A549 (cell line): ENCODE measurements at regions of chr9 and their contacts with region 1.

Region 1: GRCh38 chr9:128863647-128864046 is 18.1 kb downstream of the KYAT1 start:
- DNase-seq: peak; percentile 78 to 82
- ATAC-seq: peak; percentile 96 to 99
- H3K4me3 ChIP-seq: no peak overlapping the region
- H3K27ac ChIP-seq: peak overlapping the region; percentile 62 to 79; a peak in 4 of 6 replicates
- H3K4me1 ChIP-seq: peaks cover 16% of the 10 kb centered on the region; the same call in 2 of the 3 replicates
- CTCF ChIP-seq: peak; percentile 87
- EP300 ChIP-seq: no peak
- POLR2A ChIP-seq: no peak
- RAD21 ChIP-seq: peak; percentile 86 to 88

Region 2: DNA sequence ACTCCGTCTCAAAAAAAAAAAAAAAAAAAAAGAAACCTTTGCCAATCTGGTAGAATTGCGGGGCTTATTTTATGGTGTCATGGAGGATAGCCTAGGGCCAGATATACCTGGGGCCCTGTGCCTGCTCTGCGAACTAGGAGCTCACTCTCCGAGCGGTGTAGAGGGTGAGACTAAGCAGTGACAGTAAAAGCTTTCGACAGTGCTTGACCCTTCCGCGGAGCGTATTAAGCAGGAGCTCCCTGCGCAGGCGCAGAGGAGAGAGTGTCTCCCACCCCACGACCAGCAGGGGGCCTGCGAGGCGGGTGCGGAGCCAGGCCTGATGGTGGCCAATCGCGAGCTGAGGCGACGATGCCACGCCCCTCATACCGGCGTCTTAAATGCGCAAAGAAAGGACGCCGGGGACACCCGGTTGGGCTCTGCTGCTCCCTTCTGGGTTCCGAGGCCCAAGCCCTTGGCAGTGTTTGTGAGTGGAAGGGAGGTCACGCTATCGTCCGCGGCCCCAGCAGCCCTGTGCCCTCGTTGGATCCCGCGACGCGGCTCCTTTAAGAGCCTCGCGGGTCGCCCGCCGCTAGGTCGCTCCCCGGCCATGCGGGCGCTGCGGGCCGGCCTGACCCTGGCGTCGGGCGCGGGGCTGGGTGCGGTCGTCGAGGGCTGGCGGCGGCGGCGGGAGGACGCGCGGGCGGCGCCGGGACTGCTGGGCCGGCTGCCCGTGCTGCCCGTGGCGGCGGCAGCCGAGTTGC is 45.4 kb before region 1 on chr9 and contains the start of gene ENDOG:
- CTCF ChIA-PET with region 1: interaction called, 11 read pairs
- POLR2A ChIA-PET with region 1: no interaction called
- DNase-seq: peak; percentile 97 to 98
- ATAC-seq: peak; percentile 86 to 92
- H3K4me3 ChIP-seq: peak within 1 kb of the TSS; percentile 76
- H3K27ac ChIP-seq: peak within 1 kb of the TSS; percentile 90 to 93
- H3K4me1 ChIP-seq: peaks cover 11% of the 10 kb centered on the region
- CTCF ChIP-seq: peak; percentile 72
- EP300 ChIP-seq: no peak
- POLR2A ChIP-seq: peak; percentile 96
- RAD21 ChIP-seq: peak; percentile 22 to 31; a peak in 1 of 5 replicates
- polyA plus RNA-seq, gene ENDOG: 12.6 and 12.8 TPM in 2 replicates

Region 3: DNA sequence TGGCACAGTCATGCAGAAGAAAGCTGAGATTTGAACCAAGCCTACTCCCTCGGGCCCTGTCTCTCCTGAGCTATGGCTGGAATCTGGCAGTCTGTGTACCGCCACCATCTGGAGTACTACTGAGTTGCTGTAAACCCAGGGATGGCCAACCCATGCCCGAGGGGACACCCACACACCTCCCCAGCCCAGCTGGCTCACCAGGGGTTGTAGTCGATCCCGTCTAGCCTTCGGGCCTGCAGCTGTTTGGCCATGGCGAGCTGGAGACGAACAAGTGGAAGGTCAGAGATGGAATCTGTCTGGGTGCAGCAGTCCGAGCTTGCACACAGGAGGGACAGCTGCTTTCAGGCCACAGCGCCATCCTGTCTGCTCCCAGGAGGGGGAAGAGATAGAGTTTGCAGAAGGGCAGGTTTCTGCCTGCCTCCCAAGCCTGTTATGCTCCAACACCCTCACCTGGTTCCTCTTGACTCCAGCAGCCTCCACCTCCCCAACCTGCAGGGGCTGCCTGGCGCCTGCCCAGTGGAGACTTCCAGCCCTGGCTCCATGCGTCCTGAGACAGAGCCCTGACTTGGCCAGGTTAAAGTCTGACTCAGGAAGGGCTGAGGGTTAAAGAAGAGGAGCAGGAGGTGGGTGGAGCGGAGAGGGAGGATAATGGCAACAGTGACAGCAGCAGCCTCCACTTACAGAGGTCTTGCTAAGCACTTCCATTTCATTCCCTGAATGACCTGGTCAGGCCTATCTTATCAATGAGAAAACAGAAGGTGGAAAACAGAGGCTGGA is 18.3 kb before region 1 on chr9:
- CTCF ChIA-PET with region 1: interaction called, 18 read pairs
- POLR2A ChIA-PET with region 1: no interaction called
- DNase-seq: no peak
- ATAC-seq: peak; percentile 78 to 86
- H3K4me3 ChIP-seq: no peak overlapping the region
- H3K27ac ChIP-seq: no peak overlapping the region
- H3K4me1 ChIP-seq: no peaks in the 10 kb centered on the region
- CTCF ChIP-seq: no peak
- EP300 ChIP-seq: no peak
- POLR2A ChIP-seq: no peak
- RAD21 ChIP-seq: no peak

Region 4: DNA sequence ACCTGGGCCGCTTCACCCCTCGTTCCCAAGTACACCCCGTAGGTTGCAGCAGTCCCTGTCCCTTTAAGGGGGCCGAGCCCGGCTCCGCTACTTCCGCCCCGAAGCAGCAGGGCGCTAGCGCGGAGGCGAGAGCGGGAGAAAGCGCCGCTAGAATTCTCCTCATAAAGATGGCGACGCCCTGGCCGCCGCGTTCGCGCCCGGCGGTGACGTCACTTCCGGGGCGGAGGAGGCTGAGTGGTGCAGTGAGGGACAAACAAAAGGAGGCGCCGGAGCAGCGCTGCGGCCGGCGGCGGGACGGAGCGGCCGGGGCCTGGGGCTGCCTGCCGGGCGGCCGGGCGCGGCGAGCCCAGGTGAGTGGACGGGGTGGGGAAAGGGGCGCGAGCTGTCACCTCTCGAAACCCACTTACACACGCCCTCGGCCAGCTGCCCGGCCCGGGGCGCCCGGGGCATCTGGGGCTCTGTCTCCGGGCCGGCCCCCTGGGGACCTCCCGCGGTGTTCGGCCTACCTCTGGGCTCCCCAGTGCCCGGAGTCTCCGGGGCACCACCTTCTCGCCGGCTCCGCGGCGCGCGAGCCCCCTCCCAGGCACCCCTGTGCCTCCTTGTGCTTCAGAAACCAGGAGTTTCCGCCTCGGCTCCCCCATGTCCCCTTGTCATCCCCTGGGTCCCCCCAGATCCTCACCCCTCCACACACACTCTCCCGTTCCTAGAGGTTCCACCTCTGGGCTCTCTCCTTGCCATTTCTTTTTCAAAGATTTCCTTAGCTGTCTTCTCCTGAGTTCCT is 18.4 kb after region 1 on chr9 and contains the starts of genes KYAT1 and LRRC8A:
- CTCF ChIA-PET with region 1: interaction called, 127 read pairs
- POLR2A ChIA-PET with region 1: interaction called, 3 read pairs
- DNase-seq: peak; percentile 95 to 96
- ATAC-seq: peak; percentile 92 to 94
- H3K4me3 ChIP-seq: peak within 1 kb of the TSS; percentile 93
- H3K27ac ChIP-seq: peak within 1 kb of the TSS; percentile 96 to 98
- H3K4me1 ChIP-seq: peaks cover 45% of the 10 kb centered on the region
- CTCF ChIP-seq: peak; percentile 13; the same call in 1 of the 3 replicates
- EP300 ChIP-seq: no peak
- POLR2A ChIP-seq: peak; percentile 84
- RAD21 ChIP-seq: 0 out of 5 replicates have a peak, but pooled peaks of 1 of the 2 experiments have one; percentile 16
- polyA plus RNA-seq, gene KYAT1: 10.0 and 12.2 TPM in 2 replicates
- polyA plus RNA-seq, gene LRRC8A: 25.9 and 29.2 TPM in 2 replicates

Region 5: DNA sequence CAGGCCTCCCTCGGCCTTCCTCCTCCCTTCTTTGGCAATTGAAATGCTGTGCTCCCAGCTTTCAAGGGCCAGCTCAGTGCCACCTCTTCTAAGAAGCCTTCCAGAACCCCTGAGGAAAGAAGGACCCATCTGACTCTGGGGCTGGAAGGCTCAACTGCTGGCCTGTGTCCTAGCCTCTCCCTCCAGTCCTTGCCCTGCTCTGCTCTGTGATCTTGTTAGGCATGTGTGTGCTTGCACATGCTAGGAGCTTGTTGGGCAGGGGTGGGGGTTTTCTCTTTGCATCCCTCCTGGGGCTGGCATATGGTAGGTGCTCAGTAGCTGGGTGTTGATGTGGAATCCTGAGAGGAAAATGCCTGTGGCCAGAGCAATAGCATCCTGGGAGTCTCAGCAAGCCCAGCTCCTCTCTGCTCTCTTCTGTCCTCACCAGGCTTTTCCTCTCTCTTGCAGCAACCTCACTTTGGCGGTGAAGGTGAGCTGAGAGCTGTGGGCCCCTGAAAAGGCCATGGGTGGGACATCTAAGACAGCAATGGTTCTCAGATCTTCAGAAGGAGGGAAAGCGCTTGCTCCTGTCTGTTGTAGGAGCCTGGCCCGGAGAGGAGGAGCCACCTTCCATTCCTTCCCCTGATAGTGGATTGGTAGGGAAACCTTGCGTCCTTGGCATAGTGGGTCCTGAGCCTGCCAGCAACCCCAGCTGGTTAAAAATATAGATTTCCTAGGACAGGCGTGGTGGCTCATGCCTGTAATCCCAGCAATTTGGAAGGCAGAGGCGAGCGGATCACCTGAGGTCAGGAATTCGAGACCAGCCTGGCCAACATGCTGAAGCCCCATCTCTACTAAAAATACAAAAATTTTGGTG is 73.9 kb after region 1 on chr9:
- CTCF ChIA-PET with region 1: interaction called, 14 read pairs
- POLR2A ChIA-PET with region 1: no interaction called
- DNase-seq: no peak
- ATAC-seq: peak; percentile 27 to 50; a peak in 4 of 6 replicates
- H3K4me3 ChIP-seq: no peak overlapping the region
- H3K27ac ChIP-seq: no peak overlapping the region
- H3K4me1 ChIP-seq: no peaks in the 10 kb centered on the region
- CTCF ChIP-seq: no peak
- EP300 ChIP-seq: no peak
- POLR2A ChIP-seq: no peak
- RAD21 ChIP-seq: no peak

Region 6: DNA sequence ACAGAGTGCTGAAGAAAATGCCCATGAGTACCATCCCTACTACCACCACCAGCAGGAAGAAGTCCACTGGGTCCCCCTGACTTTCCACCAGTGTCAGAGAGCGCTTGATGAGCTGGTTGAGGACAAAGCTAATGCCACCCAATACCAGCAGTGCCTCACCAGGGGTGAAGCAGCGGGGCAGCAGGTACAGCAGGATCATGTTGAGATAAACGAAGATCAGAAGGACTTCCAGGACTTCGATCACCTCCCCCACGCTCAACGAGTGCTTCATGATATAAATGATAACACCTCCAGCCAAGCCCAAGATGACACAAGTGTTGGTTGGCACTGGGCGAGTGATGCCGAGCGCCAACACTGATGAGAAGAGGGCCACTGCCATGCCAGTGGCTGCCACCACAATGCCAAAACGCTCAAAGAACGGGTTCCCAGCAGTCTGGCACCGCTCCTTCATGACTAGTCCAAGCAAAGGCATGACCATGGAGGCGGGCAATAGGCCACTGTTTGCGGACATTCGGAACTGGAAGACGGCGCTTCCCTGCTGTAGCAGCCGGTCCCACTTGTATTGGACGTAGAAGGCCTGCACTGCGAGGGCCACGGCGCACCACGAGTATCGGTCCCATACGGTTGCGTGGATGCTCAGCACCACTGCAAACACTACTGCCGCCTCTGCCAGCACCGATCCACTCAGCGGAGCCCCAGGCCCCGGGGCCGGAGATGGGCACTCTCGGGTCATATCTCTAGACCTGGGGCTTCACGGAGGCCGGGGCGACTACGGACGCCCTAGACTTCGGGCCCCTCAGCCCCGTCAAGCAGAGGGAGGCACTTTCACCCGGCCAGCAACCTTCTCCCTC is 83.1 kb after region 1 on chr9:
- CTCF ChIA-PET with region 1: interaction called, 14 read pairs
- POLR2A ChIA-PET with region 1: no interaction called
- DNase-seq: peak in 1 of 2 experiments; percentile 24
- ATAC-seq: peak; percentile 56 to 58
- H3K4me3 ChIP-seq: peak overlapping the region; percentile 85
- H3K27ac ChIP-seq: peak overlapping the region; percentile 91 to 95
- H3K4me1 ChIP-seq: peaks cover 12% of the 10 kb centered on the region; the same call in 2 of the 3 replicates
- CTCF ChIP-seq: no peak
- EP300 ChIP-seq: no peak
- POLR2A ChIP-seq: no peak
- RAD21 ChIP-seq: no peak